ENCODE measurements at regions of chr5 and their contacts with region 1.

Region 1: DNA sequence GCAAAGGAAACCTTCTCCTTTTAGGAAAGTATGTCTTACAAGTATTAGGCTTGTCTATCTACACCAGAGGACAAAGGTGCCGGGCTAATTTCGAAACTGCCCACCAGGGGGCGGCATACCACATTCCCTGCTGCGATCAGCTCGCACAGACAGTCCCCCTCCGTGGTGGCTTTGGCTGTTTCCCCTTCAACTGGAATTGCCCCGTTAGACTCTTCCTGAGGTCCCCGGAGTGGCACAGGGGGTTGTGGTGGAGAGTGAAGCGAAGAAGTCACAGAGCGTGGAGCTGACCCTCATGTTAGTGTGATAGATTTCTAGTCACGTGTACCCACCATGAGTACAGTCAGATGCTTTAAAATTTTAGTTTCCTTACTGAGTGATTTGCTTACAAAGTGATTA is 17.5 kb downstream of the PTTG1 start:
- DNase-seq: peak; percentile 70 to 81 (median 79)
- H3K4me3 ChIP-seq: peak overlapping the region; percentile 57 to 82 (median 71)
- H3K4me3 Mint-ChIP-seq: peak overlapping the region; percentile 94 to 98
- H3K27ac ChIP-seq: peak overlapping the region in 1 of 2 donors; percentile 60
- H3K27ac Mint-ChIP-seq: peak overlapping the region in 6 of 7 donors; percentile 58 to 87 (median 74)
- H3K4me1 ChIP-seq: peaks cover 15 to 35% of the 10 kb centered on the region in 2 donors
- H3K4me1 Mint-ChIP-seq: peaks cover 24% of the 10 kb centered on the region
- H3K27me3 ChIP-seq: no peaks in the 10 kb centered on the region
- H3K27me3 Mint-ChIP-seq: peaks cover 0 to 5% (median 2%) of the 10 kb centered on the region in 3 donors
- CTCF ChIP-seq: peak; percentile 91

Region 2: DNA sequence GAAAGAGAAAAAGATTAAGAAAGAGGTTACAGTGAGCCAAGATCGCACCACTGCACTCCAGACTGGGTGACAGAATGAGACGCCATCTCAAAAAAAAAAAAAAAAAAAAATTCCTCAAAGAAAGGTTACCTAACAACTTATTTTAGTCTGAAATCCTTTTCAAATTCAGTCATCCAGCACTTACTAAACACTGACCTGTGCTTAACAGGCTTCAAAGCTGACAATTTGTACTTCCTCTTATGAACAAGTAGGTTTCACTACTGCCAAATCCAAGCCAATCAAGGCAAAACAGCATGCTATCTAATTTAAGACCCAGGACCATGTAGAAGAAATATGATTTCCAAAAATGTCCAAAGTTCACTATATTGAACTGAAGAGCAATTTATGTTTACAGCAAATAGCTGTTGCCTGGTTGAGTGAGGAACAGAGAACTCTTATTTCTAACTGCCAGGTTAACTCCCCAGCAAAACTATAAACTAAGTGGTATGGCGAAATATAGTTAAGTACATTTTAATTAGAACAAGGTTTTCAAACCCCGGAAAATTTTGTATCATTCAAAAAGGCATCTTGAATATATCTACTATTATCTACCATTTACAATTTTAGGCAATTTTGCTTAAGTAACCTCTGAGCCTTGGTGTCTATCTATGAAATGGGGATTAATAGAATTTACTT is 333.4 kb before region 1 on chr5:
- intact Hi-C with region 1: no loop called
- DNase-seq: peak; percentile 48 to 72 (median 62)
- H3K4me3 ChIP-seq: peak overlapping the region in 1 of 3 experiments; percentile 15
- H3K4me3 Mint-ChIP-seq: no peak overlapping the region
- H3K27ac ChIP-seq: peak overlapping the region; percentile 29 to 54
- H3K27ac Mint-ChIP-seq: peak overlapping the region; percentile 51 to 89 (median 71)
- H3K4me1 ChIP-seq: peaks cover 45 to 52% of the 10 kb centered on the region in 2 donors
- H3K4me1 Mint-ChIP-seq: peaks cover 63% of the 10 kb centered on the region
- H3K27me3 ChIP-seq: no peaks in the 10 kb centered on the region
- H3K27me3 Mint-ChIP-seq: no peaks in the 10 kb centered on the region
- CTCF ChIP-seq: no peak

Region 3: GRCh38 chr5:160508780-160509361 is 69.7 kb after region 1 on chr5:
- intact Hi-C with region 1: loop called in 1 of 2 experiments (anchors 5 kb)
- DNase-seq: peak; percentile 80 to 86 (median 81)
- H3K4me3 ChIP-seq: peak overlapping the region in 1 of 3 experiments; percentile 15
- H3K4me3 Mint-ChIP-seq: peak overlapping the region in 1 of 2 donors; percentile 3
- H3K27ac ChIP-seq: no peak overlapping the region
- H3K27ac Mint-ChIP-seq: peak overlapping the region in 6 of 7 donors; percentile 9 to 79 (median 62)
- H3K4me1 ChIP-seq: peaks cover 36 to 42% of the 10 kb centered on the region in 2 donors
- H3K4me1 Mint-ChIP-seq: peaks cover 36% of the 10 kb centered on the region
- H3K27me3 ChIP-seq: no peaks in the 10 kb centered on the region
- H3K27me3 Mint-ChIP-seq: peaks cover 2 to 6% (median 5%) of the 10 kb centered on the region in 3 donors
- CTCF ChIP-seq: peak; percentile 79